ENCODE measurements at regions of chr7 and their contacts with region 1.

Region 1: GRCh38 chr7:44240983-44241510 is 40.3 kb downstream of the YKT6 start:
- DNase-seq: peak; percentile 84 to 90 (median 87)
- ATAC-seq: peak; percentile 95
- H3K4me3 ChIP-seq: peak overlapping the region; percentile 16; the same call in 1 of the 2 replicates
- H3K27ac ChIP-seq: no peak overlapping the region
- H3K4me1 ChIP-seq: peaks cover 0 to 45% of the 10 kb centered on the region in 2 experiments; a peak in 3 of 5 replicates
- H3K27me3 ChIP-seq: peaks cover 30 to 70% of the 10 kb centered on the region in 2 experiments
- CTCF ChIP-seq: peak; percentile 85 to 87 (median 86)
- EP300 ChIP-seq: no peak
- POLR2A ChIP-seq: no peak
- RAD21 ChIP-seq: peak; percentile 82 to 85

Region 2: GRCh38 chr7:44372560-44373417 is 131.7 kb after region 1 on chr7:
- CTCF ChIA-PET with region 1: no interaction called
- POLR2A ChIA-PET with region 1: no interaction called
- in situ Hi-C with region 1: no loop called
- intact Hi-C with region 1: loop called (anchors 5 kb)
- DNase-seq: peak in 2 of 4 experiments; percentile 2 to 7
- ATAC-seq: no peak
- H3K4me3 ChIP-seq: no peak overlapping the region
- H3K27ac ChIP-seq: no peak overlapping the region
- H3K4me1 ChIP-seq: peaks cover 0 to 3% of the 10 kb centered on the region in 2 experiments; a peak in 1 of 5 replicates
- H3K27me3 ChIP-seq: peaks cover 0 to 19% of the 10 kb centered on the region in 2 experiments; a peak in 2 of 5 replicates
- CTCF ChIP-seq: no peak
- EP300 ChIP-seq: no peak
- POLR2A ChIP-seq: no peak
- RAD21 ChIP-seq: no peak

Region 3: GRCh38 chr7:44477063-44477830 is 236.2 kb after region 1 on chr7:
- CTCF ChIA-PET with region 1: no interaction called
- POLR2A ChIA-PET with region 1: no interaction called
- in situ Hi-C with region 1: loop called (anchors 10 kb)
- intact Hi-C with region 1: loop called (anchors 1 kb)
- DNase-seq: peak; percentile 70 to 77 (median 74)
- ATAC-seq: peak; percentile 96
- H3K4me3 ChIP-seq: no peak overlapping the region
- H3K27ac ChIP-seq: no peak overlapping the region
- H3K4me1 ChIP-seq: no peaks in the 10 kb centered on the region; a peak in 1 of 5 replicates
- H3K27me3 ChIP-seq: no peaks in the 10 kb centered on the region
- CTCF ChIP-seq: peak; percentile 85 to 97 (median 93)
- EP300 ChIP-seq: no peak
- POLR2A ChIP-seq: no peak
- RAD21 ChIP-seq: peak; percentile 80 to 87

Measured in K562 (cell line).